Activated naive CD4-positive, alpha-beta T cell treated with anti-CD3 and anti-CD28 coated beads for 36 hours (primary cell): ENCODE measurements at regions of chrX and their contacts with region 1.

Region 1: DNA sequence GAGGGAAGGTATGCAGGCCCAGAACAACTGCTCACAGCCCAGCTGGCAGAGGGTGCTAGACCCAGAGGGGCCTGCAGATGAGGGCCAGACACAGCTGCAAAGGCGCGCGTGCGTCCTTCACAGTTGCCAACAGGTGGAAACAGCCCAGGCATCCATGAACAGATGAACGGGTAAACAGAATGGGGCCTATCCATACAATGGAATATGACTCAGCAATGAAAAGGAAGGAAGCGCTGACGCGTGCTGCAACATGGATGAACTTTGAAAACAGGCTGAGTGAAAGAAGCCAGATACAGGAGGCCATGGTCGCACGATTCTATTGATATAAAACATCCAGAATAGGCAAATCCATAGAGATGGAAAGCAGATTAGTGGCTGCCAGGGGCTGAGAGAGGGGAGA is 83.1 kb upstream of the DDX3X start:
- DNase-seq: no peak
- H3K4me3 Mint-ChIP-seq: no peak overlapping the region
- H3K27ac Mint-ChIP-seq: no peak overlapping the region
- H3K4me1 Mint-ChIP-seq: peaks cover 7% of the 10 kb centered on the region
- H3K27me3 Mint-ChIP-seq: no peaks in the 10 kb centered on the region

Region 2: DNA sequence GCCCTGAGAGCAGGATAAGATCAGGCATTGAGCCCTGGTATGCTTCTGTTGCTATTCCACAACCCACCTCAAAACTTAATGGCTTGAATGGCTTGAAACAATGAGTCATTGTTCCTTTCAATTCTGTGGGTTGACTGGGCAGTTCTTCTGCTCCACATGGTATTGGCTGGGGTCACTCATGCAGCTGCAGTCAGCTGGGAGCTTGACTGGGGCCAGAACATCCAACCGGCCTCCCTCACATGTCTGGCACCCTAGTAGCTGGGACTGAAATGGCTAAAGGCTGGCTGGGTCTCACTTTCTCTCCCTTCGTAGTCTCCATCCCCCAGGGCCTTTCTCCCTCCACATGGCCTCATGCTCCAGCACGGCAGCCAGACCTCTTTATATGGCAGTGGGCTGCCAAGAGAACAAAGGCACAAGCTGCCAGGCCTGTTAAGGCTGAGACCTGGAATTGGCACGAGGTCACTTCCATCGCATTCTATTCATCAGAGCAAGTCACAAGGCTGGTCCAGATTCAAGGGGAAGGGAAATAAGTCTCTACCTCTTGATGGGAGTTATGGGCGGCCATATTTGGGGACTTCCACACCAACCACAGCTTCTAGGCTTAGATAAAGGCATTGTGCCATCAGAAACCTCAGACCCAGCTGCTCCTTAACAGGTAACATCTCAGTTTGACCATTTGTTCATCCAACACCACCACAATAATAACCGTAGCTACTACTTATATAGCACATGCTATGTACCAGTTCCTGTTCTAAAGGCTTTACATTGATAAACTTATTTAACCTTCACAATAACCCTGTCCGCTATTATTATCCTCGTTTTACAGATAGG is 829.8 kb before region 1 on chrX:
- CTCF ChIA-PET with region 1: no interaction called
- intact Hi-C with region 1: no loop called
- DNase-seq: no peak
- H3K4me3 Mint-ChIP-seq: no peak overlapping the region
- H3K27ac Mint-ChIP-seq: no peak overlapping the region
- H3K4me1 Mint-ChIP-seq: no peaks in the 10 kb centered on the region
- H3K27me3 Mint-ChIP-seq: no peaks in the 10 kb centered on the region

Region 3: DNA sequence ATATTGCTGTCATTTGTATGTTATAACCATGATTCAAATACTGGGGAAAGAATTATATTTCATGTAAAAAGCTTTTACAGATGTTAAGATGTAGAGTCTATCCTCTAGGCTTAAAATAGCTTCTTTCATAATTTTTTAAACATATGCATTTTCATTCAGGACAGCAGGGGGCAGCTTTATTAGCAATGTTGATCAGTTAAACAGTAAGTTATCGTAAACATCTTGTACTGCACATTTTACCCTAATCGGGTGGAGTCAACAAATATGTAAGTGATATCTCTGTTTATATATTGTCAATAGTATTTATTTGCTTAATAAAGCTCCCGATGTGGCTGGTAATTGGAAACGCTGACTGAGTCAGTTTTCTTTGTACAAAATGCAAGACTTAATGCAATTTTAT is 373.0 kb before region 1 on chrX:
- CTCF ChIA-PET with region 1: no interaction called
- intact Hi-C with region 1: loop called (anchors 5 kb)
- DNase-seq: no peak
- H3K4me3 Mint-ChIP-seq: no peak overlapping the region
- H3K27ac Mint-ChIP-seq: no peak overlapping the region
- H3K4me1 Mint-ChIP-seq: peaks cover 4% of the 10 kb centered on the region
- H3K27me3 Mint-ChIP-seq: no peaks in the 10 kb centered on the region

Region 4: DNA sequence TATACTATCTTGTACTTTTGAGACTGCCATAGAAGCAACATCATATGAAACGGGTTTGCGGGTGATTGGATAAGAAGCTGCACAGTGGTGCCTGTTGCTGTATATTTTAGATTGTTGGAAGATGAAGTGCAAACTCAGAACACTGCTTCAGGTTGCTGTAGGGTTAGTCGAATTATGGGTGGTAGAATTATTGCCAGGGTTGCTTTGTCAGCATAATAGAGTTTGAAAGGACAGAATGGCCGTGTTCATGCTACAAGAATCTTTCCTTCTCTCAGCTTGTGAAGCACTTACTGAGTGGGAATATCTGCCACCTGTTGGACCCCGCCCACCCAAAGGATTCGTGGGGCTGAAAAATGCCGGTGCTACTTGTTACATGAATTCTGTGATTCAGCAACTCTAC is 50.1 kb before region 1 on chrX:
- CTCF ChIA-PET with region 1: no interaction called
- intact Hi-C with region 1: no loop called
- DNase-seq: no peak
- H3K4me3 Mint-ChIP-seq: no peak overlapping the region
- H3K27ac Mint-ChIP-seq: no peak overlapping the region
- H3K4me1 Mint-ChIP-seq: no peaks in the 10 kb centered on the region
- H3K27me3 Mint-ChIP-seq: no peaks in the 10 kb centered on the region